GM13976 (cell line): ENCODE measurements at regions of chrX and their contacts with region 1.

Region 1: GRCh38 chrX:151082076-151082948 is 94.1 kb upstream of the GPR50 start:
- DNase-seq: peak; percentile 80
- CTCF ChIP-seq: peak; percentile 91

Region 2: DNA sequence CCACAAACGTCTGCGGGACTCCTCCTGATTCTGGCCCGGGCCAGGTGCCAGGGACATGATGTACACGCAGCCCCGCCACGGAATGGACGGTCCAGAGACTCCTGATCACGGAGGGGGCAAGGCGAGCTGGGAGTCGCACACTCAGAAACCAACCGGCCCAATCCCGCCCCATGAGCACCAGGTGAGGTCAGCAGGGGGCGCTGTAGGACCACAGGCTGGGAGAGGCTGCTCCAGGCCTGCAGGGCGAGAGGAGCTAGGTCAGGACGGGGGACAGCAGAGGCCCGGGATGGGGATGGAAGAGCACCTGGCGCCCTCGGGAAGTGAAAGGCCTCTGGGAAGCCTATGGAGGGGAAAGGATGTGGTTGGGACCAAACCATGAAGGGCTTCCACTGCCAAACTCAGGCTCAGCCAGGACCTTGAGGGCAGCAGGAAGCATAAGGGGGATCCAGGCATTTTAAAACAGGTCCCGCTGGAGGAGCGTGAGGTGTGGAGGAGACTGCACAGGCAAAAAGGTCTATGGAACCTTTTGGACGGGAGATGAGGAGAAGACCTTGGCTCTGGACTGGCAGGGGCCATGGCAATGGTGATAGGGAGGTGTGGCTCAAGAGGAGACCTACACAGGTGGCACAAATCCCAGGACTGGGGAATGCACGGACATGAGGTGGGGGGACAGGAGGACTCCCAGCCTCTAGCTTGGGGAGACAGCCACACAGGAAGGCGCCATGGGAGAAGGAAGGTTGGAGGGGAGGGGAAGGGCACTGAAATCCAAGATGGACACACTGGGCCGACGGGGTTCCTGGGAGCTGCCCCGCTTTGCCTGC is 310.0 kb before region 1 on chrX:
- in situ Hi-C with region 1: loop called (anchors 10 kb)
- DNase-seq: peak; percentile 84
- CTCF ChIP-seq: peak; percentile 82